Activated CD4-positive, alpha-beta T cell treated with anti-CD3 and anti-CD28 coated beads for 36 hours (primary cell): ENCODE measurements at regions of chr18 and their contacts with region 1.

Region 1: GRCh38 chr18:68847219-68847837 is 49.4 kb downstream of the CCDC102B start:
- DNase-seq: no peak
- ATAC-seq: no peak
- H3K4me3 Mint-ChIP-seq: no peak overlapping the region
- H3K27ac Mint-ChIP-seq: no peak overlapping the region
- H3K4me1 Mint-ChIP-seq: no peaks in the 10 kb centered on the region
- H3K27me3 Mint-ChIP-seq: no peaks in the 10 kb centered on the region

Region 2: DNA sequence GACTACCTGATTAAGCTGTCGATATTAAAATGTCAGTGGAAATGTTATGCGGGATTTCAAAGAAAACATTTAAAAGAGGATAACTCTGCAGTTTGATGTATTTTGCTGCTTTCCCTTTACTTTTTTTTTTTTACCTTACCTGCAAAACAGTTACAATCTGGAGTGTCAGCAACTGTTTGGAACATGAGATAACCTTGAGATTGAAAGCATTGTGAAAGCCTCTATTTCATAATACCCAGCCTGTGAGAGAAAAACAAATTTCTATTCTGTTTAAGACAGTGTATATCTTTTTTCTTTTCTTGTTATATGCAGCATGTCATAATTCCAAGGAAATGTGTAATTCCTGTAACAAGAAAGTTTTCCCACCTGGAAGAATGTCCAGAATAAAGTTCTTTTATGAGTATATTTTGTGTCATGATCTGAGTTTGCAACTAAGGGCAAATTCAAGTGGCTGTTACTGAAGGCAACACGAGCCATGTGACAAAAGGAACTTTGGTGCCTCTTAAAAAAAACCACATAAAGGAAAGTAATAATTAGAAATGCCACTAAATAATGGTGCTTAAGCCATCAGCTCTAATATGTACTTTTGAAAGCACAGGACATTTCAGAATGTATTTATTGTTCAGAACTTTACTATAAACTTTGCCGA is 1033.8 kb before region 1 on chr18:
- CTCF ChIA-PET with region 1: no interaction called
- POLR2A ChIA-PET with region 1: no interaction called
- intact Hi-C with region 1: no loop called
- DNase-seq: no peak
- ATAC-seq: no peak
- H3K4me3 Mint-ChIP-seq: no peak overlapping the region
- H3K27ac Mint-ChIP-seq: no peak overlapping the region
- H3K4me1 Mint-ChIP-seq: no peaks in the 10 kb centered on the region
- H3K27me3 Mint-ChIP-seq: no peaks in the 10 kb centered on the region

Region 3: GRCh38 chr18:68897286-68897685 is 50.0 kb after region 1 on chr18:
- CTCF ChIA-PET with region 1: no interaction called
- POLR2A ChIA-PET with region 1: no interaction called
- intact Hi-C with region 1: no loop called
- DNase-seq: no peak
- ATAC-seq: no peak
- H3K4me3 Mint-ChIP-seq: no peak overlapping the region
- H3K27ac Mint-ChIP-seq: no peak overlapping the region
- H3K4me1 Mint-ChIP-seq: no peaks in the 10 kb centered on the region
- H3K27me3 Mint-ChIP-seq: no peaks in the 10 kb centered on the region

Region 4: GRCh38 chr18:70454704-70455322 is 1607.5 kb after region 1 on chr18:
- CTCF ChIA-PET with region 1: no interaction called
- POLR2A ChIA-PET with region 1: no interaction called
- intact Hi-C with region 1: loop called in 1 of 2 experiments (anchors 5 kb)
- DNase-seq: peak; percentile 52
- ATAC-seq: peak; percentile 76
- H3K4me3 Mint-ChIP-seq: no peak overlapping the region
- H3K27ac Mint-ChIP-seq: no peak overlapping the region
- H3K4me1 Mint-ChIP-seq: no peaks in the 10 kb centered on the region
- H3K27me3 Mint-ChIP-seq: peaks cover 2% of the 10 kb centered on the region